ENCODE measurements at regions of chr22 and their contacts with region 1.

Region 1: DNA sequence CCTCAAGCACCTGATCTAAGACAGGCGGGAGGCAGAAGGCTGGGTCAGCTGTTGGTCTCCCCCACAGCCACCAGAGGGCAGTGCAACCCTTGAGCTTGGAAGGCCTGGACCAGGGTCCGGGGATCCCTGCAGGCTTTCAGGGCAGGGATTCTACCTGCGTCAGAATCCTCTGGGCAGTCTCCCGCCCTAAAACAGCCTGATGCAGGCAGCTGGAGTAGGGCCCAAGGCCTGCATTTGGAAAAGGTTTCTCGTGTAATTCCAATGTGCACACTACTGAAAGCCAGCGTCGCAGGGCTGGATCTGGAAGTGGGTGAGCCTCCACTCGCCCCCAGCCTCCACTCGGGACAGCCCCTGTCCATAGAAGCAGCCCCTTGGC is 31.8 kb downstream of the BID start:
- DNase-seq: peak; percentile 86
- H3K4me3 ChIP-seq: no peak overlapping the region
- H3K27ac ChIP-seq: peak overlapping the region in 1 of 8 donors; percentile 10
- H3K4me1 ChIP-seq: peaks cover 0 to 16% (median 4%) of the 10 kb centered on the region in 6 donors
- H3K27me3 ChIP-seq: no peaks in the 10 kb centered on the region
- CTCF ChIP-seq: peak; percentile 22 to 87 (median 66)
- POLR2A ChIP-seq: no peak

Region 2: DNA sequence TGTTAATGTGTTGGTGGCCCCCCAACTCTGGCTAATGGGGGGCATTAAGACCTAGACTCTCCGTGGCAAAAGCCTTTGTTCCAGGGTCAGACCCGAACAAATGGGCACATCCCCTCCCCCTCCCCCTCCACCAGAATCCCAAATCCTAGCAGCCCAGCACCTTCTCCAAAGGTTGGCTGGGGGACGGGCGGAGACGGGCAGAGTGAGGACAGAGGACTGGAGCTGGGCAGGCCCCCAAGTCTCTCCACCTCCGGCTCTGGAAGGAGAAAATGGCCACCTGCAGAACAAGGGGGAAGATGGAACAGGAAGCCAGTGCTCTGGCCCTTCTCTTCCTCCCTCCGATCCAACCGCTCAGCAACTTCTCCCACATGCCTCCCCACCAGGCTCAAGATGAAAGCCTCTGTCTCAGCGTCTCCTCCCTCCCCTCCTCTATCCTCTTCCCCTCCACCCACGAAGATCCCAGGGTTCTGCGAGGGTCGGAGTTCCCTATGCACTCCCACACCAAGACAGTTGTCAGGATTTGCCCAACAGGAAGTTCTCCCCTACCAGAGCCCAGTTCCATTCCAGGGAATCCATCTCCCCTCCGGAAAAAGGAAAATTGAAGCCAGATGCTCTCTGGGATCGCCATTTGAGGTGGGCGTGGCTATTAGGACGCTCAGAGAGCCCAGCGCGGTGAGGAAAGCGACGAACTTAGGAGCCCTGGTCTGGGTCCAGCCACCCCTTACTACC is 543.3 kb before region 1 on chr22:
- intact Hi-C with region 1: no loop called
- DNase-seq: no peak
- H3K4me3 ChIP-seq: peak overlapping the region in 6 of 8 donors; percentile 2 to 46 (median 13)
- H3K27ac ChIP-seq: peak overlapping the region in 5 of 8 donors; percentile 1 to 56 (median 30)
- H3K4me1 ChIP-seq: peaks cover 0 to 11% (median 0%) of the 10 kb centered on the region in 6 donors
- H3K27me3 ChIP-seq: no peaks in the 10 kb centered on the region
- CTCF ChIP-seq: no peak
- POLR2A ChIP-seq: no peak

Region 3: GRCh38 chr22:17797721-17798559 is 55.4 kb after region 1 on chr22:
- intact Hi-C with region 1: loop called (anchors 10 kb)
- DNase-seq: no peak
- H3K4me3 ChIP-seq: no peak overlapping the region
- H3K27ac ChIP-seq: peak overlapping the region in 5 of 8 donors; percentile 9 to 69 (median 42)
- H3K4me1 ChIP-seq: peaks cover 4 to 67% (median 54%) of the 10 kb centered on the region in 6 donors
- H3K27me3 ChIP-seq: no peaks in the 10 kb centered on the region
- CTCF ChIP-seq: no peak
- POLR2A ChIP-seq: no peak

Region 4: GRCh38 chr22:18077639-18078328 is 335.3 kb after region 1 on chr22 and contains the start of gene PEX26:
- intact Hi-C with region 1: loop called (anchors 10 kb)
- DNase-seq: peak; percentile 98
- H3K4me3 ChIP-seq: peak within 1 kb of the TSS; percentile 59 to 100 (median 92)
- H3K27ac ChIP-seq: peak within 1 kb of the TSS; percentile 79 to 95 (median 88)
- H3K4me1 ChIP-seq: peaks cover 23 to 63% (median 46%) of the 10 kb centered on the region in 6 donors
- H3K27me3 ChIP-seq: no peaks in the 10 kb centered on the region
- CTCF ChIP-seq: peak in 2 of 11 experiments; percentile 13 to 25
- POLR2A ChIP-seq: peak in 1 of 3 donors; percentile 42
- total RNA-seq, gene PEX26: 29.2 to 41.0 (median 37.4) TPM

Measured in spleen (tissue), 13 donors.